Left colon (tissue), 2 donors: ENCODE measurements at regions of chr6 and their contacts with region 1.

Region 1: DNA sequence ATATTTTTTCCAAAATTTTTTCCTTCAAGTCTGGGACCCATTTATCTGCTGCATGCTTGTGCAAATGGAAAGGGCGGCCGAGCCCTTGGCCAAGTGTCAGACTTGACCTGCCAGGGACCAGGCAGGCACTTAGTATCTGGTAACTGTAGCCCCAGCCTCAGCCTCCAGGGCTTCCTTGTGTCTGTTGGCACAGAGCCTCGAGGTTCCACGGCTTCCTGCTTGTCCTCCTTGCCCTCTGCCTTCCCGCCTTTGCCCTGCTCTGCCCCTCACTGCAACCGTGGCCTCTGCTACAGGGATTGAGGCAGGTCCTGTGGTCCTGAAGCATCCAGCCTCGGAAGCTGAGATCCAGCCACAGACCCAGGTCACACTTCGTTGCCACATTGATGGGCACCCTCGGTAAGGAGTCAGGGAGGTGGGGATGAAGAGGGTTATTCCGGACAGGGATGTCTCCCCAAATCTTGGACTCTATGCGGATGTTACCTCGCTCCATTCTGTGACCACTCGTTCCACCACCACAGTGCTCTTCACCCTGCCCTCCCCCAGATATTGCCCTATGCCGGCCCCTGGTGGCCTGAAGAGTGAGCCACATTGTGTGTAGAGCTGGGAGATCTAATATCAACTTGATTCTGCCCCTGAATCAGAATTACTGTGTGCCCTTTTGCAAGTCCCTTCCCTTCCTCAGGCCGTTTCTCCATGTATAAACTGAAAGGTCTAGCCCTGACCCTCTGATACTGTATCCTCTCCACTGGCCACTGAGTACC is 41.5 kb upstream of the SRF start:
- DNase-seq: peak; percentile 48 to 59
- ATAC-seq: peak; percentile 92

Region 2: GRCh38 chr6:42845327-42845694 is 284.3 kb before region 1 on chr6:
- intact Hi-C with region 1: no loop called
- DNase-seq: peak; percentile 56 to 62
- ATAC-seq: peak; percentile 98

Region 3: GRCh38 chr6:43059168-43060033 is 70.2 kb before region 1 on chr6 and contains the starts of genes KLC4 and MRPL2:
- intact Hi-C with region 1: loop called in 1 of 2 experiments (anchors 10 kb)
- DNase-seq: peak; percentile 98 to 99
- ATAC-seq: peak; percentile 81
- total RNA-seq, gene KLC4: 109 to 122 TPM
- total RNA-seq, gene MRPL2: 62.5 to 75.0 TPM

Region 4: GRCh38 chr6:43070028-43070632 is 59.5 kb before region 1 on chr6:
- intact Hi-C with region 1: loop called (anchors 10 kb)
- DNase-seq: no peak
- ATAC-seq: peak; percentile 64